ENCODE measurements at regions of chr1 and their contacts with region 1.

Region 1: GRCh38 chr1:10909697-10910671 is 102.5 kb upstream of the TARDBP start:
- DNase-seq: peak in 1 of 2 experiments; percentile 95
- H3K4me3 ChIP-seq: no peak overlapping the region
- H3K27ac ChIP-seq: no peak overlapping the region
- H3K4me1 ChIP-seq: peaks cover 0 to 18% (median 10%) of the 10 kb centered on the region in 4 experiments; a peak in 6 of 7 replicates
- H3K27me3 ChIP-seq: no peaks in the 10 kb centered on the region
- CTCF ChIP-seq: peak; percentile 73 to 84 (median 81)
- EP300 ChIP-seq: no peak
- POLR2A ChIP-seq: no peak
- RAD21 ChIP-seq: peak; percentile 83 to 90

Region 2: GRCh38 chr1:10514490-10515235 is 395.3 kb before region 1 on chr1:
- CTCF ChIA-PET with region 1: interaction called, 17 read pairs
- POLR2A ChIA-PET with region 1: no interaction called
- DNase-seq: no peak
- H3K4me3 ChIP-seq: no peak overlapping the region
- H3K27ac ChIP-seq: no peak overlapping the region
- H3K4me1 ChIP-seq: peaks cover 12 to 25% (median 21%) of the 10 kb centered on the region in 4 experiments
- H3K27me3 ChIP-seq: no peaks in the 10 kb centered on the region
- CTCF ChIP-seq: peak; percentile 10 to 73 (median 72)
- EP300 ChIP-seq: no peak
- POLR2A ChIP-seq: no peak
- RAD21 ChIP-seq: peak; percentile 90

Region 3: DNA sequence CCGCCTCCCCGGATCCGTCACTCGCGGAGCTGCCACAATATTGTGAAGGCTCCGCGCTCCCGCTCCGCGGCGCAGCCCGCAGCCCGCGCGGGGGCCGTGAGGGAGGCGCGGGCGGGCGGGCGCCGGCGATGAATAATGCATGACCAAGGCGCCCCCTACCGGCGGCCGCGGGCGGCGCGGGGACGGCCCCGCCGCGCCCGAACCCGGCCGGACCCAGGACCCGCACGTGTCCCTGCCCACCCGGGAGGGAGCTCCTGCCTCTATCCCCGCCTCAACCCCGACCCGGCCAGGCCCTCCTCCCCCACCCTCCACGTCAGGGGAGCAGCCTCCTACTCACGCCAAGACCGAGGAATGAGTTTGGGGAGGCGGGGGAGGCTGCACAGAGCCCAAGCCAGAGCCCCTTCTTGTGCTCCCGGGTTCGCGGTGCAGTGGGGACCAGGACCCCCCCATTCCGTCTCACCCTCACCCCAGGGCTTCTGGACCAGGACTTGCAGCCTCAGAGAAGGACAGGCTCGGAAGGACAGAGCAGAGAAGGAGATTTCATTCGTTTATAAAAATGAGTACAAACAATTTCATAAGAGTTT is 42.8 kb before region 1 on chr1:
- CTCF ChIA-PET with region 1: interaction called, 49 read pairs
- POLR2A ChIA-PET with region 1: no interaction called
- DNase-seq: peak in 1 of 2 experiments; percentile 90
- H3K4me3 ChIP-seq: peak overlapping the region; percentile 13 to 60 (median 23); a peak in 5 of 8 replicates
- H3K27ac ChIP-seq: no peak overlapping the region
- H3K4me1 ChIP-seq: peaks cover 2 to 14% (median 5%) of the 10 kb centered on the region in 4 experiments; a peak in 6 of 7 replicates
- H3K27me3 ChIP-seq: peaks cover 1 to 29% (median 9%) of the 10 kb centered on the region in 4 experiments; a peak in 6 of 7 replicates
- CTCF ChIP-seq: peak; percentile 56 to 76 (median 71)
- EP300 ChIP-seq: no peak
- POLR2A ChIP-seq: no peak
- RAD21 ChIP-seq: peak; percentile 44 to 85

Region 4: DNA sequence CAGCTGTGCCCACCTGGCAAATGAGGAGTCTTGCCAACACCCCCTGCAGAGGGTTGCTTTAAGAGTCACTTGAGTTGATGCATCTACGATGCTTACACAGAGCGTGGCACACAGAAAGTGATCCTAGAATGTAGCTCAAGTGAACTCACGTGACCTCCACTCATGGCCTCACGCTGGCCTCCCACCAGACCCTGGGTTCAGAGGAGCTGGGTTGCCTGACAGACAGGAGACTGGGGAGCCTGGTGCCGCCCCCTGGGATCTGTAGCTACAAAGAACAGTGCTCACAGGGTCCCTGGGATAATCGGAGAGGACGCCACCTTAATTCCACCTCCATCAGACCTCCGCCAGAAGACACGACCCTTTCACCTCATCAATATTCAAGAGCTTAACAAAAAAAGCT is 32.1 kb before region 1 on chr1:
- CTCF ChIA-PET with region 1: interaction called, 10 read pairs
- POLR2A ChIA-PET with region 1: no interaction called
- DNase-seq: no peak
- H3K4me3 ChIP-seq: no peak overlapping the region
- H3K27ac ChIP-seq: no peak overlapping the region
- H3K4me1 ChIP-seq: no peaks in the 10 kb centered on the region
- H3K27me3 ChIP-seq: no peaks in the 10 kb centered on the region
- CTCF ChIP-seq: no peak
- EP300 ChIP-seq: no peak
- POLR2A ChIP-seq: no peak
- RAD21 ChIP-seq: no peak

Region 5: DNA sequence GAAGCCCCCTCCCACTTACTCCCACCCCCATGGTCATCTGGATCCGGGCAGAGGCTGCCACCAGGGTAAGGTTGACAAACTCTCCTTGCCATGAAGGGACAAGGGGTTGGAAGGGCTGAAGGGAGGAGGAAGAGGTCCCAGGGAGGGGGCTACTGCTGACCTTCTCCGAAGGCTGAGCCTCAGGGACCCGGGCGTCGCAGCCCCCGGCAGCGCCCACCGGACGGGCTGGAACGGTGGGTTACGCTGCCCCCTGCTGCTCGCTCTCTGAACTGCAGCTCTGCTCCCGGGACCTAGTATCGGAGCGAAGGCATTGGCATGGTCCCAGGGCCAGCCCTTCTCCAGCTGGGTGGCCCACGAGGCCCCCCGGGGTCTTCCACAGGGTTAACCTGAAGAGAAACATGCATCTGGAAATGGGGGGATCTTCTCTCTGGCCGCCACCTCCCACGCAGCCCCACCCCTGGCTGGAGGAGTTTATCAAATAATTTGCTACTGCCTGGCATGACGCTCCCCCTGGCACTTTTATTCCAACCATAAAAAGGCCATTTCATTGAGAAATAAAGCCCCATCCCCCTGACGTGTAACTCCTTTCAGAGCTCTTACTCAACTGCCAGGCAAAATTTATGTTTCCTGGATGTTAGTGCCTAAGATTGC is 32.0 kb after region 1 on chr1:
- CTCF ChIA-PET with region 1: interaction called, 10 read pairs
- POLR2A ChIA-PET with region 1: interaction called, 3 read pairs
- DNase-seq: peak in 1 of 2 experiments; percentile 99
- H3K4me3 ChIP-seq: peak overlapping the region in 3 of 4 experiments; percentile 20 to 48 (median 32); a peak in 3 of 8 replicates
- H3K27ac ChIP-seq: no peak overlapping the region
- H3K4me1 ChIP-seq: peaks cover 0 to 5% (median 3%) of the 10 kb centered on the region in 4 experiments; a peak in 3 of 7 replicates
- H3K27me3 ChIP-seq: peaks cover 0 to 3% (median 0%) of the 10 kb centered on the region in 4 experiments; a peak in 2 of 7 replicates
- CTCF ChIP-seq: peak in 2 of 3 experiments; percentile 87 to 90; a peak in 3 of 4 replicates
- EP300 ChIP-seq: no peak
- POLR2A ChIP-seq: no peak
- RAD21 ChIP-seq: peak; percentile 89 to 94